MCF 10A (cell line): ENCODE measurements at regions of chr5 and their contacts with region 1.

Region 1: DNA sequence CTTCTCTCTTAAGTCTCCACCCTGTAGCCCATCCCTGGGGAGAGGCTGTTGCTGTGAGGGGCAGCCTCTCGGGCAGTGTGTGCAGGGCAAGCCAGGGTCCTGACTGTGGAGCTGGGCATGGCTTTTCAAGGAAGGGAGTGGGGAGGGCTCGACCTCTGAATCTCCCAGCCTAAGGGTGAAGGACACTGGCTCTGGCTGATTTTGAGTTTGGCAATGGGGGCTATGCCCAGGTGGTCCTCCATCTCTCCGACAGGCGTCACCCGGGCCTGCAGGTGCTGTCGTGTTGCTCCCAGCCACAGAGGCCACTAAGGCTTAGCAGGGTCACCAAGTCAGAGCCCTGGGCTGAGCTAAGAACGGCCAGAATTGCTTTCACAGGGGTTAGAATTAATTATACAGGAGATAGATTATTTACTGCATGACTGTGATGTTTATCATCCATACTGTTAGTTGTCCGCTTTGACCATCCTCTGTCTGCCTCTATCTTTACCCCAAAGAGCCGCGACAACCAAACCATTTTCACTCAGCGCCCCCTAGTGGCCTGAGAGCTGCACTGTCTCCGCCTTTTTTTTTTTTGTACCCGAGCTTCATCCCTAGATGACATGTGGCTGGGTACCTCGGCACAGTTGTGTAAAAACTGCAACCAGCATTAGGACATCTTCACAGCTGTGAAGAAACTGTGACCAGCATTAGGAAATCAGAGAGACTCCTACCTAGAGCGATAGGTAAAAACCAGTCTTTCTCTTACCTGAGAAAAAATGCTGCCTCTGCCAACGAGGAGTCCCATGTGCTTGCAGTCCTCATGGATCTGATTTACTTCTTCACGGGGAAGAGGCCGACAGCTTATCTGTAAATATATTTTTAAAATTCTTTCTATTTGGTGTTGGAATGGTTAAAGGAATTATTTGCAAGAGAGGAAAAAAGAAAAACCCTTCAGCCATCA is 44.5 kb downstream of the AGXT2 start:
- DNase-seq: peak; percentile 85
- H3K4me3 Mint-ChIP-seq: no peak overlapping the region
- H3K27ac Mint-ChIP-seq: no peak overlapping the region
- H3K4me1 Mint-ChIP-seq: no peaks in the 10 kb centered on the region
- H3K27me3 Mint-ChIP-seq: peaks cover 39% of the 10 kb centered on the region
- CTCF ChIP-seq: peak; percentile 92

Region 2: GRCh38 chr5:34474573-34475021 is 528.7 kb before region 1 on chr5:
- CTCF ChIA-PET with region 1: interaction called, 13 read pairs
- POLR2A ChIA-PET with region 1: no interaction called
- intact Hi-C with region 1: loop called (anchors 1 kb)
- DNase-seq: peak; percentile 67
- H3K4me3 Mint-ChIP-seq: no peak overlapping the region
- H3K27ac Mint-ChIP-seq: no peak overlapping the region
- H3K4me1 Mint-ChIP-seq: no peaks in the 10 kb centered on the region
- H3K27me3 Mint-ChIP-seq: peaks cover 16% of the 10 kb centered on the region
- CTCF ChIP-seq: peak; percentile 90

Region 3: GRCh38 chr5:34695275-34696027 is 307.8 kb before region 1 on chr5:
- CTCF ChIA-PET with region 1: no interaction called
- POLR2A ChIA-PET with region 1: no interaction called
- intact Hi-C with region 1: no loop called
- DNase-seq: no peak
- H3K4me3 Mint-ChIP-seq: peak overlapping the region; percentile 33
- H3K27ac Mint-ChIP-seq: peak overlapping the region; percentile 85
- H3K4me1 Mint-ChIP-seq: peaks cover 22% of the 10 kb centered on the region
- H3K27me3 Mint-ChIP-seq: no peaks in the 10 kb centered on the region
- CTCF ChIP-seq: no peak

Region 4: GRCh38 chr5:34791761-34792244 is 211.5 kb before region 1 on chr5:
- CTCF ChIA-PET with region 1: no interaction called
- POLR2A ChIA-PET with region 1: no interaction called
- intact Hi-C with region 1: no loop called
- DNase-seq: no peak
- H3K4me3 Mint-ChIP-seq: no peak overlapping the region
- H3K27ac Mint-ChIP-seq: no peak overlapping the region
- H3K4me1 Mint-ChIP-seq: no peaks in the 10 kb centered on the region
- H3K27me3 Mint-ChIP-seq: no peaks in the 10 kb centered on the region
- CTCF ChIP-seq: no peak

Region 5: DNA sequence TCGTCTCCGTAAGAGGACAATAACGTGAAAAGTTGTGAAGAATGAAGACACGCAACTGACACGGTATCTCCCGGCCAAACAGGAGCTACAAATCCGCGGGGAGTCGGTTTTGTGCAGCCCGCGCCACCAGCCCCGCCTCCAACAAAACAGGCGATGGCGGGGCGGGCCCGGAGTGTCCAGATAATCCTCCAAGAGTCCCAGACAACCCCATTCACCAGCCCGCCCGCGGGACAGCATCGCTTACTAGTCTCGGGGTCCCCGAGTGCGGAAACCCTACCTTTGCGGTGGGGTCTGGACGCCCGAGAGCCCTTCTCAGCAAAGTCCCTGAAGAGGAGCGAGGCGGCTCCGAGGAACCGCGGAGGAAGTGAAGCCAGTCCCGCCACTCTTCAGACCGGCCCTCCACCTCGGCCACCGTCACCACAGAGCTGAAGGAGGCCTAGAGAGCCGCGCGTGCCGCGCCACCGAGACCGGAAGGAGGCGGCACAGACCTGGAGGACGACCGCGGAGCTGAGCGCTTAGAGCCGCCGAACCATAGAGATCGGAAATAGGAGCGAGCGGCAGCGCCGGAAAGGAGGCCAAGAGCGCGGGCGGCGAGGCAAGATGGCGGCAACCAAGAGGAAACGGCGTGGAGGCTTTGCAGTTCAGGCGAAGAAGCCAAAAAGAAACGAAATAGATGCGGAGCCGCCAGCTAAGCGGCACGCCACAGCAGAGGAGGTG is 88.0 kb before region 1 on chr5 and contains the starts of genes BRIX1 and RAD1:
- CTCF ChIA-PET with region 1: interaction called, 5 read pairs
- POLR2A ChIA-PET with region 1: no interaction called
- intact Hi-C with region 1: loop called (anchors 1 kb)
- DNase-seq: peak; percentile 97
- H3K4me3 Mint-ChIP-seq: no peak within 1 kb of the TSS
- H3K27ac Mint-ChIP-seq: no peak within 1 kb of the TSS
- H3K4me1 Mint-ChIP-seq: peaks cover 12% of the 10 kb centered on the region
- H3K27me3 Mint-ChIP-seq: no peaks in the 10 kb centered on the region
- CTCF ChIP-seq: no peak
- total RNA-seq, gene BRIX1: 36.0 and 50.8 TPM in 2 replicates
- total RNA-seq, gene RAD1: 16.7 and 17.2 TPM in 2 replicates

Region 6: GRCh38 chr5:34957857-34958690 is 45.2 kb before region 1 on chr5:
- CTCF ChIA-PET with region 1: interaction called, 34 read pairs
- POLR2A ChIA-PET with region 1: interaction called, 5 read pairs
- intact Hi-C with region 1: loop called (anchors 1 kb)
- DNase-seq: peak; percentile 48
- H3K4me3 Mint-ChIP-seq: no peak overlapping the region
- H3K27ac Mint-ChIP-seq: no peak overlapping the region
- H3K4me1 Mint-ChIP-seq: peaks cover 7% of the 10 kb centered on the region
- H3K27me3 Mint-ChIP-seq: no peaks in the 10 kb centered on the region
- CTCF ChIP-seq: peak; percentile 33

Region 7: GRCh38 chr5:34991486-34992238 is 11.6 kb before region 1 on chr5:
- CTCF ChIA-PET with region 1: interaction called, 15 read pairs
- POLR2A ChIA-PET with region 1: no interaction called
- intact Hi-C with region 1: no loop called
- DNase-seq: no peak
- H3K4me3 Mint-ChIP-seq: no peak overlapping the region
- H3K27ac Mint-ChIP-seq: no peak overlapping the region
- H3K4me1 Mint-ChIP-seq: no peaks in the 10 kb centered on the region
- H3K27me3 Mint-ChIP-seq: peaks cover 31% of the 10 kb centered on the region
- CTCF ChIP-seq: no peak

Region 8: GRCh38 chr5:35608881-35609779 is 605.8 kb after region 1 on chr5:
- CTCF ChIA-PET with region 1: no interaction called
- POLR2A ChIA-PET with region 1: no interaction called
- intact Hi-C with region 1: no loop called
- DNase-seq: peak; percentile 32
- H3K4me3 Mint-ChIP-seq: no peak overlapping the region
- H3K27ac Mint-ChIP-seq: no peak overlapping the region
- H3K4me1 Mint-ChIP-seq: peaks cover 9% of the 10 kb centered on the region
- H3K27me3 Mint-ChIP-seq: no peaks in the 10 kb centered on the region
- CTCF ChIP-seq: no peak